ENCODE measurements at regions of chr9 and their contacts with region 1.

Region 1: DNA sequence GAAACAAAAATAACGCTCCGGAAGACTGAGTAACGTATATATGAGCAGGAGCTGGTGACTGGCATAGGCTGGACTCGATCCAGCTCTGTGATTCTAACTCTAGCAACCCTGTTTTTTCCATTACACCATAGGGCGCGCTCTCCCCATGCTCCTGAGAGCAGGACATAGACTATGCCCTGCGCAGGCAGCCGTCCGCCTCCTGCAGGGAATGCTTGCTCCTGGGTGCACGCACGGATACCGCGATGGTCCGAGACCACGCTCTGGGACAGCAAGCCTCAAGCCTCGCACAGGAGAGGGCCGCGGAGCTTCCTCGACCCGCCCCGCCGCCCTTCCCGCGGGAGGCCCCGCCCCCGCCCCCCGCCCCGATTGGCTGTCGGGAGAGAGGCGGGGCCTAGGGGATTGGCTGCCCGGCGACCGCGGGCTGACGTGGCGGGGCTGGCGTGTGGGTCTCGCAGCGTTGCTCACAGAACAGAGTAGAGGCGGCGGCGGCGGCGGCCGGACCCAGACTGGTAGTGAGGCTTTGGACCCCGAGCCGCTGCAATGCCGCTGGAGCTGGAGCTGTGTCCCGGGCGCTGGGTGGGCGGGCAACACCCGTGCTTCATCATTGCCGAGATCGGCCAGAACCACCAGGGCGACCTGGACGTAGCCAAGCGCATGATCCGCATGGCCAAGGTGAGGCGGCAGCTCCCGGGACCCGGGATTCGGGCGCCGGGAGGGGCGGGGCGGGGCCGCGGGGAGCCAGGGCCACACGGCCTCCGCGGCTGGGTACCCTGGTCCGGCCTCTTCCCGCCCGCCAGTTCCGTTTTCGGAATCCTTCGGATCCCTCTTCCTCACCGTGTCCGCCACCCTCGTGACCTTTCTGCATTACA is at the start of gene NANS:
- DNase-seq: peak; percentile 97
- H3K4me3 ChIP-seq: peak within 1 kb of the TSS; percentile 78 to 95 (median 82)
- H3K27ac ChIP-seq: peak within 1 kb of the TSS; percentile 95 to 98 (median 96)
- H3K4me1 ChIP-seq: peaks cover 0 to 20% (median 9%) of the 10 kb centered on the region in 4 donors
- H3K27me3 ChIP-seq: no peaks in the 10 kb centered on the region
- CTCF ChIP-seq: no peak
- EP300 ChIP-seq: no peak
- POLR2A ChIP-seq: peak; percentile 73 to 92
- total RNA-seq, gene NANS: 24.6 to 38.1 (median 28.4) TPM

Region 2: GRCh38 chr9:97555164-97555563 is 501.3 kb before region 1 on chr9:
- intact Hi-C with region 1: no loop called
- DNase-seq: no peak
- H3K4me3 ChIP-seq: no peak overlapping the region
- H3K27ac ChIP-seq: peak overlapping the region in 1 of 4 donors; percentile 25
- H3K4me1 ChIP-seq: peaks cover 0 to 30% (median 28%) of the 10 kb centered on the region in 4 donors
- H3K27me3 ChIP-seq: no peaks in the 10 kb centered on the region
- CTCF ChIP-seq: no peak
- EP300 ChIP-seq: no peak
- POLR2A ChIP-seq: no peak

Region 3: DNA sequence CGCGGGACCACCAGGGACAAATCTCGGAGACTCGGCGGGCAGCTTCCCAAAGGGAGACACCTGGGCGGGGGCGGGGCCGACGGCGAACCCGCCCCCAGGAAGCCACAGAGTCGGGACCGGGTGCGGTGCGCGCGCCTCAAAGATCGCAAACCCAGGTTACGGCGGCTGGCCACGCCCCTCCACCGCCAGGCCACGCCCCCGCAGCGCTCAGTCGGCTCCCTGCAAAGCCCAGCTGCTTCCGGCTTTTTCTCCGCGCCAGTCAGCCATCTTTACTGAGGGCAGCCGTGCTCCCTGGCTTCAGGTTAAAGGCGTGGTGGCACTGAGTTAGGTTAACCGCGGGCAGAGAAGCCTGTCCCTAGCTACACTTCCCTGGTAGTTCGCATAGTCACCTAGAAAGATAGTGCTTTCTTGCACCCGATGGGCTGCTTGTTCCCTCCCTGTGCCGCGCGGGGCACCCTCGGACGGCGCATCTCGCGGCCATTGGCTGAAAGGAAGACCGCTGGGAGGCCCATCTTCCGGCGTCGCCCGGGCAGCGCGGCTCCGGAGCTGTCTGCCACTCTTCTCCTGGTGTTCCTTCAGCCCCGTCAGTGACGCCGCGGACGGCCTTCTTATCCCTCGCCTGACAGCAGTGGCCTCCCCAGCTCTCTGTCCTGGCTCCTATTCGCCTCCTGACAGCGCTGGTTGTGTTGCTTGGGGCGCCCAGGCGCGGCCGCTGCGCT is 199.2 kb after region 1 on chr9 and contains the start of gene TBC1D2:
- intact Hi-C with region 1: loop called (anchors 1 kb)
- DNase-seq: peak; percentile 97
- H3K4me3 ChIP-seq: peak within 1 kb of the TSS; percentile 52 to 95 (median 89)
- H3K27ac ChIP-seq: peak within 1 kb of the TSS; percentile 91 to 98 (median 95)
- H3K4me1 ChIP-seq: peaks cover 0 to 23% (median 18%) of the 10 kb centered on the region in 4 donors
- H3K27me3 ChIP-seq: no peaks in the 10 kb centered on the region
- CTCF ChIP-seq: no peak
- EP300 ChIP-seq: no peak
- POLR2A ChIP-seq: peak; percentile 40 to 51
- total RNA-seq, gene TBC1D2: 4.8 to 13.8 (median 5.3) TPM